Posterior vena cava (tissue), 2 donors: ENCODE measurements at regions of chr11 and their contacts with region 1.

Region 1: DNA sequence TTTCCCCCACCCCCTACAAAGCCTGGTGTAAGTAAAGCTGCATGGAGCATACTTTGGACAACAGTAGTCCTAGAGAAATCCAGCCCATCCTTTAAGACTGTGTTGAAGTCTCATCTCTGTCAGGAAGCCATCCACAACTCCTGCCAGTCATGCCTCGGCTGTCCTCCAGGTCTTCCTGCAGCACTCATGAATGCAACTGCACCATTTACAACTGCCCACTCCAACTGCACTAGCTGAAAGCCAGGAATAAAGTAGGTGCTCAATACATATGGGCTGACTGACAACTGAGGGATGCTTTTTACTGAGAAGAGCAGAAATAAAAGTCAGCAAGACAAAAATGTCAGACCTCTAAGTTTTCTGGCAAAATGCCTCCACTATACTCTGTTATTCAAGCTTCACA is 27.4 kb downstream of the IL18BP start:
- DNase-seq: no peak

Region 2: GRCh38 chr11:71991494-71991893 is 34.6 kb before region 1 on chr11:
- intact Hi-C with region 1: no loop called
- DNase-seq: no peak

Region 3: DNA sequence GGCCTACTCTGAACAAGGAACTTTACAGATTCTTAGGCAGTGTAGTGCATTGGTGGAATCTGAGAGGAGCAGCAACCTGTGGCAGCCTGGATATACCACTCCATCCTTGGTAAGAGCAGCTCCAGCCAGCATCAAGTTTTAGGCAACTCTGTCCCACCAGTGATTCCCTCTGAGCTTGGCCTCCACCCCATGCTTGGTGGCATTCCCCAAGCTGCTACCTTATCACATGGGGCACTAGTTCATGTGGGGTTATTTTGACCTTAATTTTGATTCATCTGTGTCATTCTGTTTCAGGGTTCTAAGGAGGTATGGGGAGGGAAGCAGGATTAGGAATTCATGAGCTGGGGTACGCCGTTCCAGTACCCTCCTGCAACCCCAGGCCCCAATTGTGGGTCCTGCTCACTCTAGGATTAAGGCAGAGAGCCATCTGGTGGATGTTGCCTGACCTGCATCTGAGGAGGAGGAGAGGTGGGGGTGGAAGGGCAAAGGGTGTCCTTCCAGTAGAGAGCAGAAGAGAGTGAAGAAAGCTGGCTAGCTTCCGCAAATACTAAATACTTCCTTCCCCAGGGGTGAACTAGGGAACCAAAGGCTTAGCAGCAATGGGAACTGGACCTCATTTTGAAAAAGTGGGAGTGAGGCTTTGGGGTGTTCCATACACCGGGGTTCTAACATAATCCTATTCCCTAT is 65.1 kb after region 1 on chr11:
- intact Hi-C with region 1: loop called (anchors 2 to 5 kb)
- DNase-seq: peak; percentile 89

Region 4: GRCh38 chr11:72589802-72590761 is 564.0 kb after region 1 on chr11:
- intact Hi-C with region 1: no loop called
- DNase-seq: peak; percentile 80